ENCODE measurements at regions of chr20 and their contacts with region 1.

Region 1: GRCh38 chr20:9359561-9360308 is 154.7 kb upstream of the LAMP5 start:
- DNase-seq: peak; percentile 50
- ATAC-seq: peak; percentile 80

Region 2: DNA sequence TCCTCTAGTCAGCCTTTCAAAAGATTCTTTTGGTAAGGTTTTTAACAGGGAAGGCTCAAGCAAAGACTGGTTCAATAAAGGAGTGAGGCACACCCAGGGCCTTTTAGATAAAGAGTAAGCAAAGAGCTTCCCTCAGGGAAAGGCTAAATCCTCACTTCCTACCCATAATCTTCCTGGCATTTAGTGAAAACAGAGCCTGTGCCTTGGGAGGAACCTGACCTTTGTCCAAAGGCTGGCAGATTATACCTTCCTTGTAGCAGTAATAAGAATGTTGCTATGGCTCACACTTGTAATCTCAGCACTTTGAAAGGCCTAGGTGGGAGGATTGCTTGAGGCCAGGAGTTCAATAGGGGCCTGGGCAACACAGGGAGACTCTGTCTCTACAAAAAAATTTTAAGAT is 570.9 kb before region 1 on chr20:
- intact Hi-C with region 1: loop called (anchors 5 kb)
- DNase-seq: no peak
- ATAC-seq: no peak

Region 3: DNA sequence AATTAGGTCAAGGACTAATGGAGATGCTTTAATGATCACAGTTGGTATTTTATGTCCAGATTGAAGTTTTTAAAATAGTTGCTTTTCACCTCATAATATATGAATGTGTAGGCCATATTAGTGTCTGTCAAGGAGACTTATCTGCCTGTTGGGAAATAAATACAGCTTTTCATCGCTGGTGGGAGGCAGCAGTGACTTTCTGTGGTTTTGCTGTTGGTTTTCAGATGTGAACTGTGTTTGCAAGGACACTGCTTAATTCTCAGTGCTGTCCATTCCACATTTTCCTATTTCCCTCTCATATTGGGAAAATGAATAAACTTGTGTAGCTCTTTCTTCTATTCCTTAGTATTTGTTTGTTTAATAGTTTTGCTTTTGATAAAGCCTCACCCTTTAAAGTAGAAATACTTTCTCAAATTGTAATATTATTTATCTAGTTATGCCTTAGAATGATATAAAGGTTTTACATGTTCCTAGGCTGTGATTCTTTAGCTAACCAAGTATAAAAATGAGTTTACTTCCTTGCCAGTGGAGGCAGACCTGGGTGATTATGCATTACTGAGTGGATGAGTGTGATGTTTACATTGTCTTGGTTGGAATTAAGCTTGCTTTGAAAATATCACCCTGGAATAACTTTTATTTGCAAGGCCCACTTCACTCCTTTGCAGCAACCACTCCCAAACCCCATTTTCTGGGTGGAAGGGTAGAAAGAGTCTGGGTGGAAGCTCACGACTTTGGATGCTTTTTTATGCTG is 287.6 kb before region 1 on chr20:
- intact Hi-C with region 1: loop called (anchors 10 kb)
- DNase-seq: no peak
- ATAC-seq: no peak

Region 4: DNA sequence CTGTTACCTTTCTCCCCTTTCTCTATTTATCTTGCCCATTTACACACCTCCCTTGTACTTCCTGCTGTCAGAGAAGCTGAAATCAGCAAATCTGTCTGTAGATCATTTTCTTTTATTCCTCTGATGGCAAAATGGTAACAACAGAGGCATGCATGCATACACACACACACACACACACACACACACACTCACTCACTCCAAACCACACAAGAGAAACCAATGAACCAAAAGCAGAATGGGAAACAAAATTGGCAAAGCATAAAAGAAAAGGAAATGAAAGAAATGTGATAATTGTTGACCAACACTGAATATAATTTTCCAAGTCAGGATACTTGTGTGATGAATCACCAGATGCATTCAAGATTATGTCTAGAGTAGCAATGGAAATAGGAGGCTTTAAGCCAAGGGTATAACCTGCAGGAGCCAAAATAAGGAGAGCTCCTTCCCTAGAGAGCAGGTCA is 118.5 kb before region 1 on chr20:
- intact Hi-C with region 1: no loop called
- DNase-seq: no peak
- ATAC-seq: no peak